Activated CD8-positive, alpha-beta memory T cell treated with anti-CD3 and anti-CD28 coated beads, Interleukin-2, amount 10 ng/mL, durations not matched to agents 7 days and 5 days (primary cell): ENCODE measurements at regions of chr13 and their contacts with region 1.

Region 1: GRCh38 chr13:102596147-102597028 is at the start of gene TPP2:
- DNase-seq: peak; percentile 99
- ATAC-seq: peak; percentile 89
- H3K4me3 Mint-ChIP-seq: peak within 1 kb of the TSS; percentile 96
- H3K27ac Mint-ChIP-seq: peak within 1 kb of the TSS; percentile 99
- H3K4me1 Mint-ChIP-seq: peaks cover 60% of the 10 kb centered on the region
- H3K27me3 Mint-ChIP-seq: no peaks in the 10 kb centered on the region
- total RNA-seq, gene TPP2: 74.8 to 95.7 TPM

Region 2: DNA sequence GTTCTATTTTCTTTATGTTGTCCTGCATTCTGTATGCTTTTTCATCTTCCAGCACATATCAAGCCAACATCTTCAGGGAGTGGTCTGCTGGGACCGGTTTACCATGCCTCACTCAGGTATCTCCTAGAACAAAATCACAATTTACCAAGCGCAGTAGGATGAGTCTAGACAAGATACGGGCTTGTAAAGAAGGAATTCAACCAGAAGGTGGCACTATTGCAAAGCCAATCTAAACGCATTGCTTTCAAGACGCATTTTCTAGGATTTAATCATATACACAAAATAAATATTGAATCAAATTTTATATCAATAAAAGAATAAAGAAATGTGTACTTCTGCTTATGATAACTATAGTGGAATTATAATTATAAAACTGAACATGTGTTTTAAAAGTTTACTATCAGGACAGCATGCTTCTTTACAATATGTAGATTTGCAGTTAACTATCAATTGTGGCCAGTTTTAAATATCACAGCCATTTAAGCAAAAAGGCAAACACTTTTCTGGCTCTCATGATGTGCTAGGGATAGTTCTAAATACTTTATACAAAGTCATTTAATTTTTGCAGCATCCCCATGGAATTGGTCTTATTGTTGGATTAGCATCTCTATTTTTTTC is 15.7 kb before region 1 on chr13:
- CTCF ChIA-PET with region 1: interaction called, 16 read pairs
- DNase-seq: no peak
- ATAC-seq: peak; percentile 80
- H3K4me3 Mint-ChIP-seq: no peak overlapping the region
- H3K27ac Mint-ChIP-seq: no peak overlapping the region
- H3K4me1 Mint-ChIP-seq: peaks cover 11% of the 10 kb centered on the region
- H3K27me3 Mint-ChIP-seq: peaks cover 8% of the 10 kb centered on the region

Region 3: GRCh38 chr13:102724923-102725322 is 128.5 kb after region 1 on chr13:
- CTCF ChIA-PET with region 1: interaction called, 11 read pairs
- DNase-seq: no peak
- ATAC-seq: no peak
- H3K4me3 Mint-ChIP-seq: no peak overlapping the region
- H3K27ac Mint-ChIP-seq: no peak overlapping the region
- H3K4me1 Mint-ChIP-seq: peaks cover 8% of the 10 kb centered on the region
- H3K27me3 Mint-ChIP-seq: peaks cover 24% of the 10 kb centered on the region

Region 4: DNA sequence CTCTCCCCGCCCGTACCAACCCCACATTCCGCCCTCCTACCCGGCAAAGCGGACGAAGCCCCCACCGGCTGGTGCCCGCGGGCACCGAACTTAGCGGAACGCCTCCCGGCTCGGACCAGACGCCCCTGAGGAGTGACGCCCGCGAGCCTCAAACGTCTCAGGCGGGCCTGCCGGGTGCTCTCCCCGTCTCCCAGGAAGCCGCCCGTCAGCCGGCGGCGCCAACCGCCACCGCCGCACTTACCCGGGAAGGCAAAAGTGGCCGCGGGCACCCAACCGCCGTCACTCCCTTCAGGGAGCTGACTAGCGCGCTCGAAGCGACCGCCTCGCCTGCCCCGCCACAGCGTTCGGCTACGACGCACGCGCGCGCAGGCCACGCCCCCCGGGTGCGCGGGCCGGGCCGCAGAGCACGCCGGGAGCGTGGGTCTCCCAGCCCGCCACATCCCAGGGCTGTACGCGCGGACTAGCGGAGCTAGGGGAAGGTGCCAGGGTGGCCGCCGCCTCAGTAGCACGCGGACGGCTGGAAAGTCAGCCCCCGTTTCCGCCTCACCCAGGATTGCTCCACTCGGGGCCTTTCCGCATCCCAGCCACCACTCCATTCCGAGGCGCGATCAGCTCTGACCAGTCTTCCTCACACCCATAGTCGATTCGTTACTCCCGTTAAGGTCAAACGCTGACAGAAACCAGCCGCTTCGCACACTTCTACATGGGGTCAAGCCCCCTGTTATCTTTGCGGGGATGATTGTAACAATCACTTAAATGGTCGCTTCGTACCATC is 177.2 kb after region 1 on chr13 and contains the start of gene TEX30:
- CTCF ChIA-PET with region 1: interaction called, 14 read pairs
- DNase-seq: peak; percentile 89
- ATAC-seq: peak; percentile 95
- H3K4me3 Mint-ChIP-seq: peak within 1 kb of the TSS; percentile 93
- H3K27ac Mint-ChIP-seq: peak within 1 kb of the TSS; percentile 96
- H3K4me1 Mint-ChIP-seq: peaks cover 54% of the 10 kb centered on the region
- H3K27me3 Mint-ChIP-seq: no peaks in the 10 kb centered on the region
- total RNA-seq, gene TEX30: 32.4 to 69.5 TPM

Region 5: DNA sequence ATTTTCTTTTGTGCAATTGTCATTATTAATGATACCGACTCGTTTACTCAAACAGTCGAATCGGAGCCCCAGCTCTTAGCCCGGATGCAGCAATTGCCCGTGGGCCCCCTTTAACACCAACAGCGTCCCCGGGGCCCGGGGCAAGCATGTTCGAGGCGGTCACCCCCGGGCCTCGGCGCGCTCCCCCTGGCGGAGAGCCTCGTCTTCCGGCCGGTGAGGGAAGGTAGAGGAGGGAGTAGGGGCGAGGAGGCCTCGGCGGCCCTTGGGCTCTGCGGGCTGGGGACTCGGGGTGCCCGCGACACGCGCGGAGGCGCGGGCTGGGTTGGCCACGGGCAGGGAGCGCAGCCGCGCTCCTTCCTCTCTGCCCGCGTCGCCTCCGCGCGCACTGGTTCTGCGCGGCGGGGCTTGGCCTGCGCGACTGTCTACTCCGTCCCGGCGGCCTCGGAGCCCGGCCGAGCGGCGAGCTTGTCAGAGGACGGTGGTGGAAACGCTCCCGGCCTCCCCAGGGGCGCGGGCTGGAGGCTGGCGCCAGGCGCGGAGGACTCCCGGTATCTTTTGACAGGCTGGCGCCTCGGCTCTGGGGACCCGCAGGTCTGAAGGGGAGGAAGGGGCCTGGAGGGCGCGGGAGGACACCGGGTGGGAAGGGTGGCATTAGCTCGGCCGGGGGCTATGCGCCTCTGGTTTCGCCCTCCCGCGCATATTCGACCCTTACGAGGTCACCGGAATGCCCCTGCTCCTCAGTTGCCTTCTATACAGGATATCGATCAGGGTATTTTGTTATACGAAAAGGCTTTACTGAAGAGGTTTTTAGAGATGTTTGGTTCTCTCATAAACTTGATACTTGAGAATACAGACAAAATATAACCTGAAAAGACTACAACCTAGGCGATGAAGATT is 204.0 kb after region 1 on chr13:
- CTCF ChIA-PET with region 1: interaction called, 36 read pairs
- DNase-seq: peak; percentile 90
- ATAC-seq: peak; percentile 82
- H3K4me3 Mint-ChIP-seq: peak overlapping the region; percentile 96
- H3K27ac Mint-ChIP-seq: peak overlapping the region; percentile 86
- H3K4me1 Mint-ChIP-seq: peaks cover 44% of the 10 kb centered on the region
- H3K27me3 Mint-ChIP-seq: no peaks in the 10 kb centered on the region

Region 6: GRCh38 chr13:102845630-102846260 is 249.4 kb after region 1 on chr13 and contains the start of gene ERCC5:
- CTCF ChIA-PET with region 1: interaction called, 28 read pairs
- DNase-seq: peak; percentile 97
- ATAC-seq: peak; percentile 88
- H3K4me3 Mint-ChIP-seq: peak within 1 kb of the TSS; percentile 99
- H3K27ac Mint-ChIP-seq: peak within 1 kb of the TSS; percentile 99
- H3K4me1 Mint-ChIP-seq: peaks cover 42% of the 10 kb centered on the region
- H3K27me3 Mint-ChIP-seq: no peaks in the 10 kb centered on the region
- total RNA-seq, gene ERCC5: 75.8 to 76.1 TPM

Region 7: DNA sequence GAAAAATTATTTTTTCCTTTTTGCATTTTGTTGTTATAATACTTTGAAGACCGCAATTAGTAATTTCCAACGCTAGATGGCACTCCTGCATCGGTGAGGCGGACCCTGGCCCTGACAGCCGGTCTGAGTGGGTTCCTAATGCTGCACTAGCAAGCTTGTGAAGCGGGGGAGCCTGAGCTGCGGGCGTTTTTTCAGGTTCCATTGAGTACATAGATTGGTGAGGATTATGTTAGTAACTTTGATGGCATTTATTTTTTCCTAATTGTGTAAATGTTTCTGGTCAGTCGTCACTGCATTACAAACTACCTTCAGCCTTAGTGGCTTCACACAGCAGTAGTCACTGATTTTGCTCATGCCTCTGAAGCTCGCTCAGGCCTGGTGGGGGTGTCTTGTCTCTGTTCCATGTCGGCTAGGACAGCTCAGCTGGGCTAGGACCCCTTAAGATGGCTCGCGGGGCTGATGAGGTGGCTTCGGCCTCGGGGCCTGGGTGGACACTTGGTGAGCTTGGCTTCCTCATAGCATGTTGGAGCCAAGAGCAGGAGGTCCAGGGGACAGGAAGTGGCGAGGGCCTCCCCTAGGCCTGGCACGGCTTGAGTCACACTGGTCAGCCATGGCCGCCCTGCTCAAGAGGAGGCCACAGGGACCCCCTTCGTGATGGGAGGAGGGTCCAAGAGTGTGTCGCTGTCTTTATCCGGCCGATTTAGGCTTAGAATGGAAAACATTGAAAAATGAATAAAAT is 274.5 kb after region 1 on chr13:
- CTCF ChIA-PET with region 1: interaction called, 10 read pairs
- DNase-seq: peak; percentile 69
- ATAC-seq: peak; percentile 66
- H3K4me3 Mint-ChIP-seq: no peak overlapping the region
- H3K27ac Mint-ChIP-seq: no peak overlapping the region
- H3K4me1 Mint-ChIP-seq: peaks cover 40% of the 10 kb centered on the region
- H3K27me3 Mint-ChIP-seq: no peaks in the 10 kb centered on the region

Region 8: GRCh38 chr13:103007427-103007762 is 411.0 kb after region 1 on chr13:
- CTCF ChIA-PET with region 1: no interaction called
- DNase-seq: no peak
- ATAC-seq: no peak
- H3K4me3 Mint-ChIP-seq: no peak overlapping the region
- H3K27ac Mint-ChIP-seq: no peak overlapping the region
- H3K4me1 Mint-ChIP-seq: no peaks in the 10 kb centered on the region
- H3K27me3 Mint-ChIP-seq: no peaks in the 10 kb centered on the region